ENCODE measurements at regions of chr10 and their contacts with region 1.

Region 1: GRCh38 chr10:48300556-48300955 is 5.9 kb upstream of the MAPK8 start:
- DNase-seq: no peak
- H3K4me3 ChIP-seq: no peak overlapping the region
- H3K27ac ChIP-seq: no peak overlapping the region
- H3K4me1 ChIP-seq: no peaks in the 10 kb centered on the region; the same call in 1 of the 2 replicates
- H3K27me3 ChIP-seq: no peaks in the 10 kb centered on the region
- CTCF ChIP-seq: no peak

Region 2: GRCh38 chr10:48253970-48254657 is 46.4 kb before region 1 on chr10:
- CTCF ChIA-PET with region 1: no interaction called
- POLR2A ChIA-PET with region 1: no interaction called
- intact Hi-C with region 1: loop called (anchors 5 kb)
- DNase-seq: peak; percentile 85 to 94
- H3K4me3 ChIP-seq: peak overlapping the region; percentile 6; the same call in 1 of the 2 replicates
- H3K27ac ChIP-seq: peak overlapping the region; percentile 70
- H3K4me1 ChIP-seq: peaks cover 31% of the 10 kb centered on the region
- H3K27me3 ChIP-seq: no peaks in the 10 kb centered on the region
- CTCF ChIP-seq: no peak

Region 3: GRCh38 chr10:48957361-48958151 is 657.0 kb after region 1 on chr10:
- CTCF ChIA-PET with region 1: no interaction called
- POLR2A ChIA-PET with region 1: no interaction called
- intact Hi-C with region 1: no loop called
- DNase-seq: no peak
- H3K4me3 ChIP-seq: no peak overlapping the region
- H3K27ac ChIP-seq: no peak overlapping the region
- H3K4me1 ChIP-seq: no peaks in the 10 kb centered on the region
- H3K27me3 ChIP-seq: peaks cover 14% of the 10 kb centered on the region; the same call in 1 of the 2 replicates
- CTCF ChIP-seq: no peak

Measured in PC-9 (cell line).